Posterior cingulate gyrus (tissue), 11 donors: ENCODE measurements at regions of chr7 and their contacts with region 1.

Region 1: GRCh38 chr7:28272461-28272877 is 91.9 kb upstream of the JAZF1 start:
- DNase-seq: peak in 9 of 10 donors; percentile 29 to 92 (median 58)

Region 2: DNA sequence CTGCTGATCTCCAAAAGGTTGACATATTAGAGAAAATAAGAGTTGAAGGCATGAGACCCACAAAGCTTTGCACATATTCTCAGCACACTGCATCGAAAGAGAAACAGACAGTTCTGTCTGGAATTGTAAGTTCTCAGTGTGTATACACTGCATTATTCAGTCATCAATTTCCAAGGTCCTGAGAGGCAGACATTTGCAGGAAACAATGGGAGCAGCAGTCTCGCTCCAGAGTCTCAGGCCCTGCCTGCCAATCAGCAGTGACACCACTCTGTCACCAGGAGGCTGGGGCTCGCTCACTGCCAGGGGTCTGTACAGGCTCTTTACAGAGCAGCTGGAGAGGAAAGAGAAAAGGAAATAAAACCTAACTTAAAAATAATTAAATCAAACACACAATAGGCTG is 128.2 kb before region 1 on chr7:
- intact Hi-C with region 1: loop called (anchors 5 kb)
- DNase-seq: peak in 8 of 10 donors; percentile 34 to 94 (median 54)

Region 3: GRCh38 chr7:28179120-28180030 is 93.1 kb before region 1 on chr7:
- intact Hi-C with region 1: loop called (anchors 5 kb)
- DNase-seq: peak; percentile 45 to 94 (median 70)